Naive thymus-derived CD8-positive, alpha-beta T cell (primary cell): ENCODE measurements at regions of chr14 and their contacts with region 1.

Region 1: DNA sequence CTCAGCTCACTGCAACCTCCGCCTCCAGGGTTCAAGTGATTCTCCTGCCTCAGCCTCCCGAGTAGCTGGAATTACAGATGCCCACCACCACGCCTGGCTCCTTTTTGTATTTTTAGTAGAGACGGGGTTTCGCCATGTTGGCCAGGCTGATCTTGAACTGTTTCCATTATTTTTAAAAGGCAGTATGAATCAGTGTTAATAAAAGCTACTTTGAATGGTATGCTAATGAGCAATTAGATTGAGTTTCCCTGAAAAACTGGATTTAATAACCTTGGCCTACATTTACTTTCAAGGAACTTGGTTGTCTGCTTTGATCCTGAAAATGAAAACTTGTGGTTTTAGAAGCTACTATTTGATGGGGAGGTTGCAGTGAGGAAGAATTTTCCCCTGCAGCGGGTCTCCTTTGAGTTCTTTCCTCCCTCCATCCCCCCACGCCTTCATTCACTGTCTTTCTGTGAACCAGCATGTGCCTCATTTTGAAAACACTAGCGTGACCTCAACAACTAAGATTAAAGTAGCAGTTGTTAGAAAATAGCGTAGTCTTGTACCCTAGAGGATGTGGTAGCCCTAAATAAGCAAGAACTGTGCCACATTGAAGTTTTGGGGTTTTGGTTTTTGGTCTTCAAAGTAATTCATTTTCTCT is 17.8 kb upstream of the RPS6KA5 start:
- DNase-seq: peak in 8 of 10 donors; percentile 21 to 89 (median 70)
- ATAC-seq: peak; percentile 99 to 100
- H3K4me3 Mint-ChIP-seq: peak overlapping the region; percentile 41 to 83 (median 76)
- H3K27ac Mint-ChIP-seq: peak overlapping the region; percentile 58 to 94 (median 83)
- H3K4me1 Mint-ChIP-seq: peaks cover 23 to 33% (median 31%) of the 10 kb centered on the region in 4 donors
- H3K27me3 Mint-ChIP-seq: peaks cover 0 to 9% (median 1%) of the 10 kb centered on the region in 5 donors

Region 2: DNA sequence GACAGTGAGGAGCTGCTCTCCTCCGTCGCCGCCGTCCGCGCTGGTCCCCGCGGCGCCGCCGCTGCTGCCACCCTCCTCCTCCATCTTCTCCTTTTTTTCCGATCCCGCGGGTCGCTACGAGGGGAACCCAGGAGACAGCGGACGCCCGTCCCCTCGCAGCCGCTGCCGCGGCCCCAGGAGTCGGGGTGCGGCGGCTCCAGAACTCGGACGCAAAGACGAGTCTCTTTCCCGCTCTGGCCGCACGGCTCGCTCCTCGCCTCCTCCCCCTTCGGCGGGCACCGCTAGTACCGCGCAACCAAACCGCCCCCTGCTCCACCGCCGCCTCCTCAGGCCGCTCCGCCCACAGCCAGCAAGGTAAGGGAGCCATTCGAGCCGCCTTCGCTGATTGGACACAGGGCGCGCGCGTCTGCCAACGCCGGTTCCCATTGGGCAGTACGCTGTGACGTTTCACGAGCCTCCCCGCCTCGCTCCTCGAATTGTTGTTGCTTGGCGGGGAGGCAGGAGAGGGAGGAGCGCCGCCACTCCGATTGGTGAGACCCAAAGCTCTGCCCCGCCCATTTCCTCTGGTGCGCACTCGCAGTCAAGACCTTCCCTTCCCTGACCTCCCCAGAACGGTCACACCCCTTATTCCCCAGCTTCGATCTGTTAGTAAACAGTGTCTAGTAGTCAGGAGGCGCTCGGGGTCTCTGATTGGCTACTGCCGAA is 17.7 kb before region 1 on chr14 and contains the start of gene RPS6KA5:
- POLR2A ChIA-PET with region 1: interaction called, 17 read pairs
- DNase-seq: peak; percentile 95 to 100 (median 100)
- ATAC-seq: peak; percentile 80 to 82
- H3K4me3 Mint-ChIP-seq: peak within 1 kb of the TSS in 9 of 10 donors; percentile 76 to 91 (median 86)
- H3K27ac Mint-ChIP-seq: peak within 1 kb of the TSS in 9 of 10 donors; percentile 27 to 91 (median 83)
- H3K4me1 Mint-ChIP-seq: peaks cover 31 to 65% (median 61%) of the 10 kb centered on the region in 4 donors
- H3K27me3 Mint-ChIP-seq: no peaks in the 10 kb centered on the region
- polyA plus RNA-seq, gene RPS6KA5: 12.3 to 14.5 (median 14.3) TPM

Region 3: GRCh38 chr14:91114079-91115065 is 36.2 kb after region 1 on chr14:
- POLR2A ChIA-PET with region 1: interaction called, 21 read pairs
- DNase-seq: peak; percentile 37 to 76 (median 58)
- ATAC-seq: peak; percentile 83 to 85
- H3K4me3 Mint-ChIP-seq: peak overlapping the region; percentile 86 to 99 (median 94)
- H3K27ac Mint-ChIP-seq: peak overlapping the region; percentile 91 to 99 (median 98)
- H3K4me1 Mint-ChIP-seq: peaks cover 28 to 85% (median 77%) of the 10 kb centered on the region in 4 donors
- H3K27me3 Mint-ChIP-seq: no peaks in the 10 kb centered on the region